Ascending aorta (tissue), 2 donors: ENCODE measurements at regions of chr17 and their contacts with region 1.

Region 1: DNA sequence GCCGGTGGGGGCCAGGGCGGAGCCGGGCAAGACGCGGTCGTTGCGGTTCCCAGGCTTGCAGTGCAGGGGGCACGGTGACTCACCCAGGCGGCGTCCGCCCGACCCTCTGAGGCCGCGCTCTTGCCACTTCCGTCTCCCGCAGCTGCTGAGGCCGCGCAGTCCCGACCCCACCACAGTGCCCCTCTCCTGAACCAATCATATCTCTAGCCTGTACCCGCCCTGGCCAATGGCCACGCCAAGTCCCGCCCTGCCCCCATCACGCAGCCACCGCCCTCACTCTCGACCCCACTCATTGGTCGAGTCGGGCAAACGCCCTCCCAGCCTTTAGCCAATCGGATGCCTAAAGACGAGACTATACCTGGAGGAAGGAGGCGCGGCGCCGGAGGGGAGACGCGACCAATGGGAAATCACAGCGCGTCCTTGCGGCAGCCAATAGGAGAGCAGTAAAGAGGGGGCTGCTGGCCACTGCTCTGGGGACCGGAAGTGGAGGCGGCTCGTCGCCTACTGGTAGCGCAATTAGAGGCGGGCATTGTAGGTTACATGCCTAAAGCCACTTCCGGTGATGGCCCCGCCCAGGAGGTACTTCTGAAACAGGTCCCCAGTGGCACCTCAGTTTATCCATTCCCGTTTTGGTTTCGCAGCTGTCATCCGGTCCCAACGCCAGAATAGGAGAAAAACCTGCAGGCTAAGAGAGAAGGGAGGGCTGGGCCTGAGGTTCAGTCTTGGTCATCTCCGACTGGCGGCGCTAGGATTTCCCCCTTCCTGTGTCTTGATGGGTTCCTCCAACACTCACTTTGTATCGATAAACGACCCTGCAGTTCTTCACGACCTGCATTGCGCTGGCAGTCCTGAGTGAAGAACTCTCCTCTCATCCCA is 3.5 kb upstream of the MTMR4 start:
- DNase-seq: peak; percentile 100
- H3K4me3 ChIP-seq: peak overlapping the region; percentile 74 to 86
- H3K27ac ChIP-seq: peak overlapping the region; percentile 93 to 98
- H3K4me1 ChIP-seq: peaks cover 7 to 17% of the 10 kb centered on the region in 2 donors
- H3K27me3 ChIP-seq: no peaks in the 10 kb centered on the region
- CTCF ChIP-seq: no peak

Region 2: GRCh38 chr17:58082870-58083490 is 435.0 kb before region 1 on chr17 and contains the start of gene DYNLL2:
- intact Hi-C with region 1: loop called (anchors 5 kb)
- DNase-seq: peak; percentile 65 to 96
- H3K4me3 ChIP-seq: peak within 1 kb of the TSS; percentile 66 to 76
- H3K27ac ChIP-seq: peak within 1 kb of the TSS; percentile 90 to 92
- H3K4me1 ChIP-seq: peaks cover 6 to 27% of the 10 kb centered on the region in 2 donors
- H3K27me3 ChIP-seq: no peaks in the 10 kb centered on the region
- CTCF ChIP-seq: no peak
- total RNA-seq, gene DYNLL2: 15.3 TPM

Region 3: DNA sequence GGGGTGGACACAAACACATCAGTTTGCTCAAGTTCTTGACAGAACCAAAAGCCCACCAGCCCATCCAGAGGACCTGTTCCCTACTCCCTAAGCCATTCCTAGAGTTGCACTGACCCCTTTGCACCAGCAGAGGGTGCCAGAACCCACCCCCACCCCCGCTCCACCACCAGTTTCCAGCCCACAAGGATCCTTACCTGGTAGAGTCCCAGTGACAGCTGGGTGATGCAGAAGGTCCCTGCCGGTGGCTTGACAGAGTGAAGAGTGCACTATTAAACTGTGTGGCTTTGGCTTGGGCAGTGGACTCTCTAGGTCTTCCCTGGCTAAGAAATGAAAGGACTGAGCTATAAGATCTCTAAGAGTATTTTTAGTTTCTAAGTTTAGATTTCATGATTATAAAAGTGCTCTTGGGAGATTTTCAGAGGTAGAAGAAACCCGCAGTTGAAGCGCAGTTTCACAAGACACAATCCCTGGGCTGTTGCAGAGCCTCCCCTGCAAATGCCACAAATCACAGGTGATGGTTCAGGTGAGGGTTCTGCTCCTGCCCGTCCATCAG is 69.8 kb after region 1 on chr17:
- intact Hi-C with region 1: loop called (anchors 2 kb)
- DNase-seq: peak in 1 of 2 donors; percentile 74
- H3K4me3 ChIP-seq: no peak overlapping the region
- H3K27ac ChIP-seq: no peak overlapping the region
- H3K4me1 ChIP-seq: no peaks in the 10 kb centered on the region
- H3K27me3 ChIP-seq: no peaks in the 10 kb centered on the region
- CTCF ChIP-seq: peak; percentile 73 to 92 (median 90)

Region 4: DNA sequence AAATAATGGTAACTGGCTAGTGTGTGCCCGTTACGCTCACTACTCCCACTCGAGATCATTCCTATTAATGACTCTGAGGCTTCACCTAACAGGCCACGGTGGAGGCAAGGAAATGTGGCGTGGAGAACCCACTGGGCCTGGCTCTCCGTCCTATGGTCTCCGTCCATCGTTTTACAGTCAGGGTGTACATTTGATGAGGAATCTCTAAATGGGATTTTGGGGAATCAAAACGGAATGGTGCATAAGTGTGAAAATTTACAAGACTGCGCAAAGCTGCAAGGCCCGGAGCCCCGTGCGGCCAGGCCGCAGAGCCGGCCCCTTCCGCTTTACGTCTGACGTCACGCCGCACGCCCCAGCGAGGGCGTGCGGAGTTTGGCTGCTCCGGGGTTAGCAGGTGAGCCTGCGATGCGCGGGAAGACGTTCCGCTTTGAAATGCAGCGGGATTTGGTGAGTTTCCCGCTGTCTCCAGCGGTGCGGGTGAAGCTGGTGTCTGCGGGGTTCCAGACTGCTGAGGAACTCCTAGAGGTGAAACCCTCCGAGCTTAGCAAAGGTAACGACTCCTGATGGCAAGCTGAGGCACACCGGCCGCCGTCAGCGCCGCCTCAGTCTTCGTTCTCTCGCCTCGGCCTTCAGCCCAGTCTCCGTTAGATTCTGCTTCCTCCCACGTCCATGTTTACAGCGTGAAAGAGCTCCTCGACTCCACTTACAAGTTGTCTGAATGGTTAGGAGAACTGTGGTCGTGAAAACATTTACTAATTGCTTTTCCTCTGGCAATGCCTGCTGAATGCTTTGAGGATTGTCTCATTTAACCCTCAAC is 174.5 kb after region 1 on chr17 and contains the start of gene RAD51C:
- intact Hi-C with region 1: loop called (anchors 2 kb)
- DNase-seq: peak; percentile 11 to 86
- H3K4me3 ChIP-seq: peak within 1 kb of the TSS; percentile 60 to 73
- H3K27ac ChIP-seq: peak within 1 kb of the TSS; percentile 73 to 84
- H3K4me1 ChIP-seq: peaks cover 4 to 8% of the 10 kb centered on the region in 2 donors
- H3K27me3 ChIP-seq: no peaks in the 10 kb centered on the region
- CTCF ChIP-seq: no peak
- total RNA-seq, gene RAD51C: 6.8 TPM

Region 5: DNA sequence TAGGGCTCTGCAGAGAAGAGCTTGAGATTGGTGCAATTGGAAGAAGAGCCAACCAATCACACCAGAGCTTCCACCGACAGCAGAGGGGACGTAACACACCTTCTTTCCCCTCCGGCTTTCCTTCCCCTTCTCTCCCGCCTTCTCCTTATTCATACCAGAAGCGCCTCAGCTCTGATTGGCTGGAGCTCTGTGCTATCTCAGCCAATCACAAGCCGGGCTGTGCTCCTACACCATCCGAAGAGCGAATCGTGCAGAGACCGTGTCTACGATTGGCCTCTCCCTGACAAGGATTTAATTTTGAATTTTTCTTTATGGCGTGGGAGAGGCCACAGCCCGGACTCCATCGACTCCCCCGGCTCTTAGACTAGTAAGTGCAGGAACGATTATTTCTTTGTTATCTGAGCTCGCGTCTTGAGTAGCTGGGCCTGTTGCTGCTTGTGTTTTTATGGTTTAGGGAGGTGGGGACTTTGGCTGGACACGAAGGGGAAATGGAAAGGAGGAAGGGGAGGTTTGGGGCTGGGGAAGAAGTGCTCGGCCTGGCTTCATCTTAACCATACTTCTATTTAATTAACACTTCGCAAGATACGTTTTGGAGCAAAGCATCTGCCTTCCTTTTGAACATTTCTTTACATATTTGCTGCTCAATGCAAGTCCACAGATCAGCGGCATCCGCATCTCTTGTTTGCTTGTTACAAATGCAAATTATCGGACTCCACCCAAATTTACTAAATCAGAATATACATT is 637.6 kb after region 1 on chr17 and contains the start of gene PRR11:
- intact Hi-C with region 1: loop called (anchors 1 kb)
- DNase-seq: peak; percentile 94 to 98
- H3K4me3 ChIP-seq: peak within 1 kb of the TSS; percentile 89 to 92
- H3K27ac ChIP-seq: peak within 1 kb of the TSS; percentile 84 to 87
- H3K4me1 ChIP-seq: peaks cover 0 to 22% of the 10 kb centered on the region in 2 donors
- H3K27me3 ChIP-seq: no peaks in the 10 kb centered on the region
- CTCF ChIP-seq: no peak
- total RNA-seq, gene PRR11: 0.11 TPM